ENCODE measurements at regions of chr13 and their contacts with region 1.

Region 1: GRCh38 chr13:110779022-110779421 is 65.5 kb downstream of the ING1 start:
- DNase-seq: no peak
- ATAC-seq: no peak
- H3K4me3 ChIP-seq: no peak overlapping the region
- H3K27ac ChIP-seq: no peak overlapping the region
- H3K4me1 ChIP-seq: no peaks in the 10 kb centered on the region
- H3K27me3 ChIP-seq: peaks cover 0 to 2% (median 0%) of the 10 kb centered on the region in 9 donors
- CTCF ChIP-seq: no peak
- POLR2A ChIP-seq: no peak

Region 2: GRCh38 chr13:110726726-110727125 is 52.3 kb before region 1 on chr13:
- intact Hi-C with region 1: loop called in 2 of 10 experiments (anchors 5 to 10 kb)
- DNase-seq: no peak
- ATAC-seq: no peak
- H3K4me3 ChIP-seq: no peak overlapping the region
- H3K27ac ChIP-seq: no peak overlapping the region
- H3K4me1 ChIP-seq: peaks cover 0 to 5% (median 0%) of the 10 kb centered on the region in 12 donors
- H3K27me3 ChIP-seq: no peaks in the 10 kb centered on the region
- CTCF ChIP-seq: no peak
- POLR2A ChIP-seq: no peak

Region 3: GRCh38 chr13:110831447-110832204 is 52.6 kb after region 1 on chr13:
- intact Hi-C with region 1: no loop called
- DNase-seq: no peak
- ATAC-seq: no peak
- H3K4me3 ChIP-seq: no peak overlapping the region
- H3K27ac ChIP-seq: no peak overlapping the region
- H3K4me1 ChIP-seq: no peaks in the 10 kb centered on the region
- H3K27me3 ChIP-seq: peaks cover 0 to 10% (median 3%) of the 10 kb centered on the region in 9 donors
- CTCF ChIP-seq: no peak
- POLR2A ChIP-seq: no peak